ENCODE measurements at regions of chr15 and their contacts with region 1.

Region 1: GRCh38 chr15:40323239-40323952 is at the start of gene INAFM2:
- DNase-seq: peak; percentile 93
- ATAC-seq: peak; percentile 79
- H3K4me3 ChIP-seq: peak within 1 kb of the TSS; percentile 84
- H3K27ac ChIP-seq: no peak within 1 kb of the TSS
- H3K4me1 ChIP-seq: peaks cover 14% of the 10 kb centered on the region
- H3K27me3 ChIP-seq: no peaks in the 10 kb centered on the region
- CTCF ChIP-seq: peak; percentile 50; the same call in 1 of the 2 replicates
- total RNA-seq, gene INAFM2: 22.1 and 32.1 TPM in 2 replicates

Region 2: DNA sequence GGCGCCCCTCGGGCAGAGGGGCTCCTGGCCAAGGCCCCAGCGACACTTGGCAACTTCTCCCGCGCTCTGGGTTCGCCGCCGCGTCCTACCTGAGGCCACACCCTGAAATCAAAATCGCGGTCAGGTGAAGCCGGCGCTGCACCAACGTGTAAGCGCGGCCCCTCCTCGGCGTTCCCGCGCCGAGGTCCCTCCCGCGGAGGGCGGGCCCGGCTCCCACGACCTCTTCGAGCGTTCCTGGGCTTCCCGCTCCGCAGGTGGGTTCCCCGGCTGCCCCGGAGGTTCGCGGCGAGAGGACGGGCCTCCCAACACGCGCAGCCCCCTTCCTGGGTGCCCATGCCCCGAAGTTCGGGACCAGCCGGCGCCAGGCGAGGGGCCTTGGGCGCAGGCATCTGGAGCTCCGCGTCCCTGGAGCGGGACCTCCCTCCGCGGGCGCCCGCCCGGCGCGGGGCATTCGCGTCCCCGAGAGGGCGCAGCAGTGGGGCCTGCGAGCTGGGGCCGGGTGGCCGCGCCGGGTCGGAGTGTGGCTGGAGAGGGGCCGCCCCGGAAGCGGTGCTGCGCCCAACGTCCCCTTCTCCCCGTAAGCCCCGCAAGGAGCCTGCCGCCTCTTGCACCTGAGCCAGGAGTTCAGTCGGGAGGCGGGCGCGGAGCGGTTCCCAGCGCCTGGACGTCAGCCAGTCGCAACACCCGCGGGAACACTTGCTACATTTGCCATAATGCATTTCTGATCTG is 70.8 kb before region 1 on chr15:
- CTCF ChIA-PET with region 1: no interaction called
- POLR2A ChIA-PET with region 1: interaction called, 23 read pairs
- intact Hi-C with region 1: no loop called
- DNase-seq: peak; percentile 72
- ATAC-seq: peak; percentile 26
- H3K4me3 ChIP-seq: peak overlapping the region; percentile 87
- H3K27ac ChIP-seq: no peak overlapping the region
- H3K4me1 ChIP-seq: peaks cover 36% of the 10 kb centered on the region
- H3K27me3 ChIP-seq: no peaks in the 10 kb centered on the region
- CTCF ChIP-seq: 0 out of 2 replicates have a peak, but pooled peaks have one; percentile 21

Region 3: GRCh38 chr15:40338041-40338657 is 14.8 kb after region 1 on chr15:
- CTCF ChIA-PET with region 1: interaction called, 10 read pairs
- POLR2A ChIA-PET with region 1: interaction called, 9 read pairs
- intact Hi-C with region 1: loop called (anchors 1 kb)
- DNase-seq: peak; percentile 73
- ATAC-seq: peak; percentile 3; the same call in 1 of the 2 replicates
- H3K4me3 ChIP-seq: peak overlapping the region; percentile 75
- H3K27ac ChIP-seq: peak overlapping the region; percentile 100
- H3K4me1 ChIP-seq: peaks cover 66% of the 10 kb centered on the region
- H3K27me3 ChIP-seq: no peaks in the 10 kb centered on the region
- CTCF ChIP-seq: peak; percentile 90

Region 4: GRCh38 chr15:40367686-40368611 is 44.6 kb after region 1 on chr15:
- CTCF ChIA-PET with region 1: interaction called, 4 read pairs
- POLR2A ChIA-PET with region 1: no interaction called
- intact Hi-C with region 1: loop called (anchors 1 kb)
- DNase-seq: peak; percentile 88
- ATAC-seq: peak; percentile 92
- H3K4me3 ChIP-seq: peak overlapping the region; percentile 37; the same call in 1 of the 2 replicates
- H3K27ac ChIP-seq: no peak overlapping the region
- H3K4me1 ChIP-seq: no peaks in the 10 kb centered on the region; the same call in 1 of the 2 replicates
- H3K27me3 ChIP-seq: no peaks in the 10 kb centered on the region
- CTCF ChIP-seq: peak; percentile 71

Region 5: DNA sequence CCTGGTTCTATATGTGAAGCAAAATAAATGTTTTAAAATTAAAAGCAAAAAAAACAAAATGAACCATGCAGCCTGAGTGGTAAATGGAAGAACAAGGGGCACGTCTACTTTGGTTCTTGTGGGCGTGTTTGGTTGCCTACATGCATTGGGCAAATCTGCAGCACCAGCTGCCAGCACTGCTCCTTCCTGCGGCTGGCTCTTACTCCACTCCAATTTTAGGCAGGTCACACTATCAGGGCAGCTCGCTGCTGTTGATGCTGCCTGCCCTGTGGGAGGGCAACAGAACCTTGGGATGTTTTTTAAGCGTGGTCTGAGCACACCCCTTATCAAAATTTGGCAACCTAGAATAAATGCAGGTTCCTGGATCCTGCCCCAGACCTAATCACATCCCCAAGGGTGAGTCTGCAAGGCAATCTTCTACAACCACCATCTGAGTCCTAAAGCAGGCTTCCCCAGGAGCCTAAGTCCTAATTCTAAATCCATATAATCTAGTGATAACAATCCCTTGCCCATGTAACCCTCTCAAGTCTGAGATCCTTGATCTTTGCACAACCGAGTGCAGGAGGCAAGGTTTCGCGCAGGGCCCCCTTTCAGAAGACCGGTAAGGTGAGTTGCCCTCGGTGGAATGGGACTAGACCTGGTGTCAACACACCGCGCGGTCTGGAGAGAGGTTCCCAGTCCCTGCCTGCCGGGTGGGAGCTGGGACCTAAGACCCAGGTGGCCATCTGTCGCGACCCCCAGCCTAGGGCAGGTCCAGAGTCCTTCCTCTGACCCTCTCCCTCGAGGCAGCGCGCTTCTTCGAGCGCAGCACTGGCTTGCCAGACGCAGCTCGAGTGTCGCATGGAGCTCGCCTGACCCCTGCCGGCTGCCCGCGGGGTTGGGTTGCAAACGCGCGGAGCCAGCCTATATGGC is 98.1 kb after region 1 on chr15:
- CTCF ChIA-PET with region 1: interaction called, 4 read pairs
- POLR2A ChIA-PET with region 1: no interaction called
- intact Hi-C with region 1: loop called (anchors 1 kb)
- DNase-seq: peak; percentile 82
- ATAC-seq: peak; percentile 84
- H3K4me3 ChIP-seq: peak overlapping the region; percentile 36; the same call in 1 of the 2 replicates
- H3K27ac ChIP-seq: peak overlapping the region; percentile 31
- H3K4me1 ChIP-seq: peaks cover 23% of the 10 kb centered on the region
- H3K27me3 ChIP-seq: no peaks in the 10 kb centered on the region
- CTCF ChIP-seq: peak; percentile 94